ENCODE measurements at regions of chr9 and their contacts with region 1.

Region 1: DNA sequence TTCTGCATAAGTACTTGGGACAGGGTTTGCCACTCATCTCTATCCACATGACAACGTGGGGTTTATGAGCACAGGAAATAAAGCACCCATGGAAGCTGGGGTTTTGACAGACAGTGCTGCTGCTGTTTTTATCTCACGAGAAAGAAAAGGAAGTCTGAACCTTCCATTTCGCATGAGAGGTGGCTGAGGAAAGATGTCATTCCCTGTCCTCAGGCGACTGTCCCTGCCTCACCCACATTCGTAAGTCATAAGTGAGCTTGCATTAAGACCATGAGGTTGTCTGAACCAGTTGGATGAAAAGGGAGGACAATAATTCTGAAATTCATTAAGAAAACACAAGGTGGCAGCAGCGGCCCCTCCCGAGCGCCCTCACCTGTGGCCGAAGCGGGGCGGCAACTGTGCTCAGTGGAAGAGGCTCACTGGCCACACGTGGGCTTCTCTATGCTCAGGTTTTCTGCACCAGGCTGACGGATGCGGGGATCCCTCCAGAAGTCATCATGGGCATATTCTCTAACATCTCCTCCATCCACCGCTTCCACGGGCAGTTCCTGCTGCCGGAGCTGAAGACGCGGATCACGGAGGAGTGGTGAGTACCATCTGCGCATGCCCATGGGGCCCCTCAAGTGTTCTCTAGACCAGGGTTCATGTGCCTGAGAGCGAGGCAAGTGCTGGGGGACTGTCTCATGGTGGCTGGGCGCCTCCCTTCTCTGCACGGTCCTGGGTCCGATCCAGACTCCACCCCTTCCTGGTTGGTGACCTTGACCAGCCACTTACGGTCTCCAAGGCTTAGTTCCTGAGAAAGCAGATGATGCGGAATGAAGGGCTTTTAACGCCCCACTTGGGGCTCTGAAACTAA is 54.7 kb upstream of the SUSD3 start:
- DNase-seq: peak; percentile 82
- H3K4me3 Mint-ChIP-seq: no peak overlapping the region
- H3K27ac Mint-ChIP-seq: peak overlapping the region; percentile 90
- H3K4me1 Mint-ChIP-seq: peaks cover 54% of the 10 kb centered on the region
- H3K27me3 Mint-ChIP-seq: no peaks in the 10 kb centered on the region

Region 2: GRCh38 chr9:92980085-92980745 is 23.6 kb before region 1 on chr9:
- CTCF ChIA-PET with region 1: interaction called, 10 read pairs
- intact Hi-C with region 1: no loop called
- DNase-seq: no peak
- H3K4me3 Mint-ChIP-seq: peak overlapping the region; percentile 45
- H3K27ac Mint-ChIP-seq: peak overlapping the region; percentile 90
- H3K4me1 Mint-ChIP-seq: peaks cover 66% of the 10 kb centered on the region
- H3K27me3 Mint-ChIP-seq: no peaks in the 10 kb centered on the region

Region 3: GRCh38 chr9:92992549-92992948 is 11.2 kb before region 1 on chr9:
- CTCF ChIA-PET with region 1: interaction called, 42 read pairs
- intact Hi-C with region 1: loop called (anchors 1 kb)
- DNase-seq: no peak
- H3K4me3 Mint-ChIP-seq: no peak overlapping the region
- H3K27ac Mint-ChIP-seq: peak overlapping the region; percentile 80
- H3K4me1 Mint-ChIP-seq: peaks cover 97% of the 10 kb centered on the region
- H3K27me3 Mint-ChIP-seq: no peaks in the 10 kb centered on the region

Region 4: DNA sequence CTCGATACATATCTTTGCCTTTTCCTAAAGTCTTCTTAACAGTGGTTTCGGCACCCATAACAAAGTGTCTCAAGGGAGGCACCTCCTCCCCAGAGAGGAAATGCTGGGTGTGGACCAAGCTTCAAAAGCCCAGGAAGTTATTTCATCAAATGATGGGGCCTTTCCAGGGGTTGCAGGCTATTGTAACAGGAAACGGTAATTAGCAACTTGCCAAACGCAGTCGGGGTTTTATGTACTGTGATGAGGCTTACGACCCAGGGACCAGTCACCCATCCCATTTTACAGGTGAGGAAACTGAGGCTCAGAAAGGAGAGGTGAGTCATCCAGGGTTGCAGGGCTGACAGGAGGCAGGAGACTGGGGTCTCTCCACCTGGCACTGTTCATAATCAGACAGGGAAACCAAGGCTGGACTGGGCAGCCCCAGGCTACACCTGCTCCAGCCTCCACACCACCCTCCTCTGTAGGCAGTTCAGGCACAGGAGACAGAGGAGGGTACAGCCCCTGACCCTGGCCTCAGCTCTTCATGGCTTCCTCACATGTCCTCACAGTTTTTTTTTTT is 24.7 kb after region 1 on chr9:
- CTCF ChIA-PET with region 1: interaction called, 27 read pairs
- intact Hi-C with region 1: no loop called
- DNase-seq: peak; percentile 90
- H3K4me3 Mint-ChIP-seq: peak overlapping the region; percentile 55
- H3K27ac Mint-ChIP-seq: peak overlapping the region; percentile 97
- H3K4me1 Mint-ChIP-seq: peaks cover 87% of the 10 kb centered on the region
- H3K27me3 Mint-ChIP-seq: no peaks in the 10 kb centered on the region

Region 5: GRCh38 chr9:93108291-93109041 is 104.7 kb after region 1 on chr9:
- CTCF ChIA-PET with region 1: interaction called, 36 read pairs
- intact Hi-C with region 1: loop called (anchors 1 kb)
- DNase-seq: peak; percentile 80
- H3K4me3 Mint-ChIP-seq: no peak overlapping the region
- H3K27ac Mint-ChIP-seq: peak overlapping the region; percentile 76
- H3K4me1 Mint-ChIP-seq: peaks cover 55% of the 10 kb centered on the region
- H3K27me3 Mint-ChIP-seq: no peaks in the 10 kb centered on the region